Left ventricle myocardium superior (tissue), 1 donor: ENCODE measurements at regions of chr4 and their contacts with region 1.

Region 1: DNA sequence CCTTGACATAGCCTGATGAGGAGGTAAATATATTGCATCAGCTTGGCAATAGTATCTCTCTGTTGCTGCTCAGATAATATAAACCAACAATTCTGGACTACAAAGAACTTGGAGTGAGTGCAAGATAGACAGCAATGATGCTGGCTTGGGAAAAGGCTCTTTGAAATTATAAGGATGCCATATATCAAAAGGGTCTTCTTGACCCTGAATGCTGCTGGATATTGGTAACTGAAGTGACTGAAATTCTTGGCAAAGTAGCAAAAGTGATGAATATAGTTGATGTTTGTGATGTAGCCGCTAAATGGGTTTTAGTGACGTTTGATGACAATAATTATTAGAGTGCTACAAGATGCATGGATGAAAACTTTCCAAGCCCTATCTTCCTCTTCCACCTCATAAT is 1391.6 kb downstream of the ADGRL3 start:
- DNase-seq: no peak
- ATAC-seq: no peak

Region 2: GRCh38 chr4:62709618-62710252 is 118.0 kb after region 1 on chr4:
- intact Hi-C with region 1: loop called (anchors 10 kb)
- DNase-seq: no peak
- ATAC-seq: peak; percentile 58

Region 3: DNA sequence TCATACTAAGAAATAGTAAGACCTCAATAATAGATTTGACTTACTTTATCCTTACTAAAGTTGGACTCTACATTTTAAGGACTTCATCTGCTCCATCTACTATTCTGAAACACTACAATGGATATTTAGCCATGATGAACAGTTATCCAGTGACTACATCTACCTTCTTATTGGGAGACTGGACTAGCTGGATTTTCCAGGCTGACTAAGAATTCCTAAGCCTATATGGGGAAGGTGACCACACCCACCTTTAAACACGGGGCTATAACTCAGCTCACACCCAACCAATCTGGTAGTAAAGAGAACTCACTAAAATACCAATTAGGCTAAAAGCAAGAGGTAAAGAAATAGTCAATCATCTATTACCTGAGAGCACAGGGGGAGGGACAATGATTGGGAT is 379.1 kb after region 1 on chr4:
- intact Hi-C with region 1: no loop called
- DNase-seq: no peak
- ATAC-seq: no peak